ENCODE measurements at regions of chr12 and their contacts with region 1.

Region 1: DNA sequence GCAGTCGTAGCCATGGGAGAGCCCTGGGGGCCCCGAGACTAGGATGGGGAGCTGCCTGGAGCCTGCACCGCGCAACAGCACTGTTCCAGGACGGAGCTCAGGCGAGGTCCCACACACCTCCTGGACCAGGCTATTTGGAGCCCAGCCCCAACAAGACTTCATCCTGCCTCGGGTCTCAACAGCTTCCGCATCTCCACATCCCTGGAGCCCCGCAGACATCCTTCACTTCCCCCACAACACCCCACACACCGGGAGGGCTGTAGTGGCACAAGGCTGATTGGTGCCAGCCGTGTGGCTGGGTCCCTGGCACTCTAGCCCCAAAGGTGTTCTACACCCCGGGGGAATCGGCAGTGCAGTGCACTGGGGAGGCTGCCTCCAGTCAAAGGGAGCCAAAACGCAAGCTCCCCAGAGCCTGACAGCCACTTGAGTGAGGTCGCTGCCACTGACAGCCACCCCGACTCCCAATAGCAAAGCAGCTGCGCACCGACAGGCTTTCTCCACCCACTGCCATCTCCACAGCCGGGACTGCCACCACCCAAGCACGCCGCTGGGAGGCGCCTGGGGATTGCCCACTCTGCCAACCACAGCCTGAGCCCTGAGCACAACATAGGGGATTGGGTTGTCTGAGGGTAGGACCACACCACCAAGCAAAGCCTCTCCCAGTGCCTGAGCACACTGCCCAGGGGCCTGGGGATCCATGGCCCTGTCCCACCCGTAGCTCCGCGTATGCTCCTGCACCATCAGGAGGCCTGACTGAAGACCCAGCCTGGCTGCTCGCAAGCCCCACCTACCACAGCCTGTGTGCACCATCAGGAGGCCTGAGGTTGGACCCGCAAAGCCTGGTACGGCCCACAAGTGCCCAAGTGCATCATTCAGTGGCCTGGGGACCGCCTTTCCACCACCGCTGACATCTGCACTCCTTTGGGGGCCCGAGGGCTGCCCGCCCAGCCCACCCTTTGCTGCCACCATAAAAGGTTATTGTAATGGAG is 13.2 kb upstream of the KLRF1 start:
- DNase-seq: peak; percentile 91
- H3K4me3 Mint-ChIP-seq: peak overlapping the region; percentile 72
- H3K27ac Mint-ChIP-seq: no peak overlapping the region
- H3K4me1 Mint-ChIP-seq: peaks cover 12% of the 10 kb centered on the region
- H3K27me3 Mint-ChIP-seq: peaks cover 19% of the 10 kb centered on the region

Region 2: DNA sequence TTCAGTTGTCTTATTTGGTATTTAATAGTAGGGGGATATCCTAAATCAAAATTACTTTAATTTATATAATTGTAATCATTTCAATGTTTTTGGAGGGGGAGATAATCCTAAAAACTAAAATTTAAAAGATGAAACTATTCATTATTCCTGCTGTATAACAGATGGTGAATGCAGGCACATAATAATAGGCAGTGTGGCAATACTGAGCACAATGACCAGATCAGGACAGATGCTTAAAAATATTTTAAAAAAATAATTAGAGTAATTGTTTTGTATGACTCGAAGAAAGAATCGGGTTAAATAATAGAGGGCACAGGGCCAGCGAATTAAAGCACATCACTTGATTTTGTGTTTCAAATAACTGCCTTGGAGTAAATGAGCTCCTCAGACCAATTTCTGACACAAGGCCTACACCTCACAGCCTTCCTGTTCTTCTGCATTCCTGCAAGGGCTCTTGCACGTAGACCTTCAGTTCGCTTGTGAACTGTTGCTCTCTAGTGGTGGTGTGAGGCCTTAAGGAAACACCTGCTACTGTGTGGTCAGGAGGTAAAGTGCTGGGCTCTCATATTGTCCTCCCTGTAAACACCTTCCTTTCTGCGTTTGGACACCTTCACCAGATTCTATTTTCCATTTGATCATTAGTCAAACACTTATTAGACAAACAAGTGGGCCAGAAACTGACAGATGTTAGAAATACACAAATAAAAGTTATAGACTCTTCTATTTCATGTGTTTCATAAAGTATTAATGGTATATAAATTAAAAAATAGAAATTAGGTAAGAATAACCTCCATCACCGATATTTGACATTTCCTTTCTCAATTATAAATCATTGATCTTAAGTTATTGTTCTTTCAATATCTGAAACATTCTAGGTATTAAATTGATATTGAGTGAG is 16.1 kb before region 1 on chr12:
- CTCF ChIA-PET with region 1: interaction called, 32 read pairs
- POLR2A ChIA-PET with region 1: no interaction called
- intact Hi-C with region 1: no loop called
- DNase-seq: peak; percentile 77
- H3K4me3 Mint-ChIP-seq: no peak overlapping the region
- H3K27ac Mint-ChIP-seq: peak overlapping the region; percentile 54
- H3K4me1 Mint-ChIP-seq: peaks cover 44% of the 10 kb centered on the region
- H3K27me3 Mint-ChIP-seq: no peaks in the 10 kb centered on the region

Region 3: DNA sequence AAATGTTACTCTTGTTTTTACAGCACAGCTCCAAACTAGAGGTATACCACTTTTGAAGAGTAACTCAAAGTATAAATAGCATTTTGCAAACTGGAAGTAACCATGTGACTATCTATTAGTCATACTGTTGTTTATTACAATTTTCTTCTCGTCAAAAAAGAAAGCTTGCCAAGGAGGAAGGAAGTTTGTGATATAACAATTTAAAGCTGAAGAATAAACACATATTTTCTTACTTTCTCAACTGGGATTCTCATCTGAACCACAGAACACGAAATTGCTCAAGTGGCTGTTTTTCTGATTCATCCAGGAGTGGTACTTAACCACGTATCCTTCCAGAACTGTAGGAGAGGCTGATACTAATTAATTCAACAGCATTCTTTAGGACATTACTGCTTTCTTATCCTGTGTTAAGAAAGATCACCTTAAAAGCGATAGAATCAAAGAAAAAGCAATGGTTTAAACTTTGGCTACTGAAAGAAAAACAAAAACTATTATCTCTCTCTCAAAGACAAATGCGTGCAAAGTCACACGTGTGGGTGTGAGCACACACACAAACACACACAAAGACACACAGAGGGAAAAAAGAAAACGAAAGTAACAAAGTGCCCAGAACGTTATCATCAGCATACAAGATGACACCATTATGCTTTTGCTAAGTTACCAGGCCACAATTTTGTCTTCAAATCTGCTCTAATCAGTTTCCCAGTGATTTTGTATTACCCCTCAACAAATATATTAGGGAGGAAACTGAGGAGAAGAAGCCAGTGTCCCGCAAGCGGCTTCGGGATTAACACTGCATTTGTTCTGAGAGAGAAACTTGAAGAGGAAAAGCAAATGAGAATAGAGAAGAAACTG is 55.4 kb after region 1 on chr12 and contains the start of gene CLEC2B:
- CTCF ChIA-PET with region 1: interaction called, 14 read pairs
- POLR2A ChIA-PET with region 1: no interaction called
- intact Hi-C with region 1: loop called (anchors 2 kb)
- DNase-seq: peak; percentile 41
- H3K4me3 Mint-ChIP-seq: peak within 1 kb of the TSS; percentile 82
- H3K27ac Mint-ChIP-seq: peak within 1 kb of the TSS; percentile 93
- H3K4me1 Mint-ChIP-seq: peaks cover 19% of the 10 kb centered on the region
- H3K27me3 Mint-ChIP-seq: no peaks in the 10 kb centered on the region
- total RNA-seq, gene CLEC2B: 12.6 to 13.7 TPM

Region 4: GRCh38 chr12:9925708-9926393 is 111.7 kb after region 1 on chr12:
- CTCF ChIA-PET with region 1: interaction called, 21 read pairs
- POLR2A ChIA-PET with region 1: no interaction called
- intact Hi-C with region 1: loop called (anchors 1 kb)
- DNase-seq: no peak
- H3K4me3 Mint-ChIP-seq: peak overlapping the region; percentile 45
- H3K27ac Mint-ChIP-seq: no peak overlapping the region
- H3K4me1 Mint-ChIP-seq: peaks cover 14% of the 10 kb centered on the region
- H3K27me3 Mint-ChIP-seq: peaks cover 3% of the 10 kb centered on the region

Region 5: DNA sequence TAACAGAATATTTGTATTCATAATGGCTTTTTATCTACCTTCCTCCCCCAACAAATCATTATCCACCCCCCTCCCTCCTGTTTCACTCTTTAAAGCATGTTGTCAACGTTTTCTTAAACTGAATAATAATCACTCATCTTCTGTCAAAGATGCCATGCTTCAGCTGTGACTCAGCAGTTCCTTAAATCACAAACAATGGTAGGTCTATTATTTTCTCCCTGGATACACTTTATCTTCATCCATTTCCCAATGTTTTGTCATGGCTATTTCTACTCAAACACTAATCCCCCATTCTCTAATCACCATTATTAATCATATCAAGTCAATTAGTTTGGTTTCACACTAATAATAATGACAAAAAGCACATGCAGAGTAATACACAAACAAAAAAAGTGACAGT is 202.8 kb after region 1 on chr12:
- CTCF ChIA-PET with region 1: interaction called, 26 read pairs
- POLR2A ChIA-PET with region 1: no interaction called
- intact Hi-C with region 1: no loop called
- DNase-seq: no peak
- H3K4me3 Mint-ChIP-seq: no peak overlapping the region
- H3K27ac Mint-ChIP-seq: no peak overlapping the region
- H3K4me1 Mint-ChIP-seq: no peaks in the 10 kb centered on the region
- H3K27me3 Mint-ChIP-seq: peaks cover 7% of the 10 kb centered on the region

Region 6: GRCh38 chr12:10190558-10191388 is 376.7 kb after region 1 on chr12:
- CTCF ChIA-PET with region 1: interaction called, 3 read pairs
- POLR2A ChIA-PET with region 1: no interaction called
- intact Hi-C with region 1: loop called (anchors 2 kb)
- DNase-seq: peak; percentile 65
- H3K4me3 Mint-ChIP-seq: no peak overlapping the region
- H3K27ac Mint-ChIP-seq: no peak overlapping the region
- H3K4me1 Mint-ChIP-seq: no peaks in the 10 kb centered on the region
- H3K27me3 Mint-ChIP-seq: peaks cover 16% of the 10 kb centered on the region